Dendritic cell treated with granulocyte-macrophage colony-stimulating factor and Interleukin-4, amounts not matched to agents 40 ng/mL and 50 ng/mL, for 4 days (primary cell): ENCODE measurements at regions of chr17 and their contacts with region 1.

Region 1: DNA sequence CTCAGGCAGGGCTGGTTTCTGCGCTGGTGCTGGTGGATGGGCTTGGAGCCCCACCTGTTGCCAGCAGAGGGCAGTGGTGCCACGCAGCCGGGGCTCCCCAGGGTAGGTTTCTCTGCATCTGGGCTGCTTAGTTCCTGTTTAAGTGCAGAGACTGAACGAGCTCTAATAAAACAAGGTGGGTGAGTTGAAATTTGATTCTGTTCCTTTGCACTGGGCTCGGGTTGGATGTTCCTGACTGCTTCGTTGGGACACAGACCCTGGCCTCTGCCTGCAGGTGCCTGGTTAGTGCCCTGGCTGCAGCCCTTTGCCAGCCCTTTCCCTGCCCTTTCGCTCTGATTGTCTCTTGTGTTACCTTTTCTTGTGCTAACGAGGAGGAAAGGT is 30.0 kb downstream of the TBCD start:
- H3K4me3 Mint-ChIP-seq: no peak overlapping the region
- H3K27ac Mint-ChIP-seq: no peak overlapping the region
- H3K4me1 Mint-ChIP-seq: peaks cover 13% of the 10 kb centered on the region
- H3K27me3 Mint-ChIP-seq: peaks cover 4% of the 10 kb centered on the region

Region 2: DNA sequence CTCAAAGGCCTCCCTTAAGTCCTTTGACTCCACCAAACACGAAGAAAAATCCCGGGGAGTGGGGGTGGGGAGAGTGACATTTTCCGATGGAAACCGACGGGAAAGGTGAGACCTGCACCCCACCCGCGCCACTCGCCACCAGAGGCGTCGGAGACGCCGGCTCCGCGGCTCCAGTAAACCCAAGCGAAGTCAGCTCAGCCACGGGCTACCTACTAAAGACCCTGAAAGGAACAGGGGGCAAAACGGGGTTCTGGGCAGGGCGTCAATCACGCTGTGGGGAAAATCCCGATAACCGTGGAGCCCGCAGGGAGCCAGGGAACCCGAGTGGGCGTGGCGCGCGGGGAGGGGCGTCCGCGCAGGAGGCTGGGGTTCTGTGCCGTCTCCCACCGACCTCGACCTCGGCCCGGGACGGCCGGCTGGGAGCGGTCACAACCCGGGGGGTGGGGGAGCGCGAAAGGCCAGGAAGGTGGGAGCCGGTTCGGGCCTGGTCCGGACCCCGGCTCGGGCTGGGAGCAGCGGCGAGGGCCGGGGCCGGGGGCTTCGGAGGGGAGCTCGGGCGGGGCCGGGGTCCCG is 134.2 kb before region 1 on chr17:
- intact Hi-C with region 1: no loop called
- H3K4me3 Mint-ChIP-seq: peak overlapping the region; percentile 81
- H3K27ac Mint-ChIP-seq: peak overlapping the region; percentile 66
- H3K4me1 Mint-ChIP-seq: peaks cover 40% of the 10 kb centered on the region
- H3K27me3 Mint-ChIP-seq: no peaks in the 10 kb centered on the region

Region 3: DNA sequence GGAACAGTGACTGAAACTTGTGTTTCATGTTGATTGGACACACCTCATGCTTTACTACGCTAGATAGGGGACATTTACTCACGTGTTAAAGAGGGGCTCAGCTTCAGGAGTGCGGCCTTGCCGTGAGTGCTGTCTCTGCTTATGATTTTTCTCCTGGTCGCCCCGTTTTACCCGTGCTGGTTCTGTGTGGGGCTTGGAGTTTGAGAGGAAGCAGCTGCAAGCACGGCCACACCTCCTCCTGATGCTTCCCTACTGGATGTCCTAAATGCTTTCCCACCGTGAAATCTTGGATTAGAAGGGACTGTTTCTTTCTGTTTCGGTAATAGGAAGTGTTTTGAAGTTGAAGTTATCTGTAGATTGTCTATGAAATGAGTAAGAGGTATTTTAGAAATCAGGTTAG is 111.9 kb after region 1 on chr17:
- intact Hi-C with region 1: no loop called
- H3K4me3 Mint-ChIP-seq: peak overlapping the region; percentile 58
- H3K27ac Mint-ChIP-seq: peak overlapping the region; percentile 77
- H3K4me1 Mint-ChIP-seq: peaks cover 17% of the 10 kb centered on the region
- H3K27me3 Mint-ChIP-seq: no peaks in the 10 kb centered on the region

Region 4: GRCh38 chr17:82913295-82914042 is 131.6 kb after region 1 on chr17:
- intact Hi-C with region 1: loop called (anchors 5 kb)
- H3K4me3 Mint-ChIP-seq: no peak overlapping the region
- H3K27ac Mint-ChIP-seq: peak overlapping the region; percentile 45
- H3K4me1 Mint-ChIP-seq: peaks cover 47% of the 10 kb centered on the region
- H3K27me3 Mint-ChIP-seq: no peaks in the 10 kb centered on the region

Region 5: GRCh38 chr17:83083323-83084201 is 301.7 kb after region 1 on chr17:
- intact Hi-C with region 1: loop called (anchors 2 kb)
- H3K4me3 Mint-ChIP-seq: peak overlapping the region; percentile 89
- H3K27ac Mint-ChIP-seq: peak overlapping the region; percentile 72
- H3K4me1 Mint-ChIP-seq: peaks cover 72% of the 10 kb centered on the region
- H3K27me3 Mint-ChIP-seq: peaks cover 2% of the 10 kb centered on the region

Region 6: DNA sequence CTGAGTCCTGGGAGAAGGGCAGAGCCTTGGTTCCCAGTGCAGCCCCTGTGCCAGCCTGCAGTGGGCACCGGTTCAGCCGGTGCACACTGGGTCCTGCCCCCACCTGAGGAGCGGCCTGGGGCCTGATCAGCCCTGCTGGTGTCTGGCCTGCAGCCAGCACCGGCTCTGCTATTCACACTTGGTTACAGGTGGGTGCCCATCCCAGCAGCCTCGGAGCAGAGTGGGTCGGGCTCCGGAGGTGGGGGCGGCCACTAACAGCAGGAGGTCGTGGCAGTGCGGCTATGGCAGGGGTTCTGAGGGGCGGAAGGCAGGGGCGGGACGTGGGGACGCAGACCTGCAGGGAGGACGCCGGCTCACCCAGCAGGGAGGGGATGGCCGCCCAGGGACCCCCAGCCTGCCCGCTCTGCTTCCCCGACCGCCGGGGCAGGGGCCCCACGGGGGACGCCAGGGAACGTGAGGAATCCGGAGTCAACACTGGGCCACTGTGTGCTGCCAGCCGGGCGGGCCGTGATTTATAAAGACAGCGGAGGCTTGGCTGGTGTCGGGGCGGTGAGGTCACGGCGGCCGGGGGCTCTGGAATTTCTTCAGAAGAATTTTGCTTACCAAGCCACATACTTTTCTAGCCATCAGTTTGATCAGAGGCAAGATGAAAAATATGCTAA is 317.8 kb after region 1 on chr17:
- intact Hi-C with region 1: loop called (anchors 5 kb)
- H3K4me3 Mint-ChIP-seq: peak overlapping the region; percentile 69
- H3K27ac Mint-ChIP-seq: peak overlapping the region; percentile 93
- H3K4me1 Mint-ChIP-seq: peaks cover 75% of the 10 kb centered on the region
- H3K27me3 Mint-ChIP-seq: peaks cover 8% of the 10 kb centered on the region